ENCODE measurements at regions of chr13 and their contacts with region 1.

Region 1: GRCh38 chr13:94362411-94362909 is 117.0 kb downstream of the DCT start:
- DNase-seq: peak; percentile 46
- ATAC-seq: peak; percentile 87
- H3K4me3 ChIP-seq: no peak overlapping the region
- H3K27ac ChIP-seq: no peak overlapping the region
- H3K4me1 ChIP-seq: no peaks in the 10 kb centered on the region
- H3K27me3 ChIP-seq: no peaks in the 10 kb centered on the region
- CTCF ChIP-seq: peak; percentile 91
- EP300 ChIP-seq: no peak
- POLR2A ChIP-seq: no peak
- RAD21 ChIP-seq: peak; percentile 87

Region 2: GRCh38 chr13:92573467-92574057 is 1788.9 kb before region 1 on chr13:
- CTCF ChIA-PET with region 1: no interaction called
- POLR2A ChIA-PET with region 1: no interaction called
- in situ Hi-C with region 1: no loop called
- intact Hi-C with region 1: loop called (anchors 5 kb)
- DNase-seq: peak; percentile 44
- ATAC-seq: peak; percentile 89
- H3K4me3 ChIP-seq: no peak overlapping the region
- H3K27ac ChIP-seq: no peak overlapping the region
- H3K4me1 ChIP-seq: no peaks in the 10 kb centered on the region
- H3K27me3 ChIP-seq: no peaks in the 10 kb centered on the region
- CTCF ChIP-seq: peak; percentile 67
- EP300 ChIP-seq: no peak
- POLR2A ChIP-seq: no peak
- RAD21 ChIP-seq: no peak

Region 3: DNA sequence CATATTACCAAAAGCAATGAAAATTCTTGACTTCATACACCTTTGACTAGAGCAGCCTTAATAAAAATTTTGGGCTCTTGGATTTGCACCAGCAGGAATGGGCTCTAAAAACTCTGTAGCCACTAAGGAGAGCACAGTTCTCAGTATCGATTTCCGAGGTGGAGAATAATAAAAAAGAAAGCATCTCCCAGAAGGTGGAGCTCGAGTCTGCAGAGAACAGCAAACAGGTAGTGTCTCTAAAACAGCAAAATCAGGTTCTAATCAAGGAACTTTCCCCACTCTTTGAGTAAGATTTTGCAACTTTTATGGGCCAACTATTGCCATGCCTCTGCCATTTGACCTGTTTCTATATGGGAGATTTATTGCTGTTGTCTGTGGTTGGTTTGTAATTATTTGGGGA is 1394.5 kb before region 1 on chr13:
- CTCF ChIA-PET with region 1: interaction called, 5 read pairs
- POLR2A ChIA-PET with region 1: no interaction called
- in situ Hi-C with region 1: loop called (anchors 25 kb)
- intact Hi-C with region 1: loop called (anchors 5 kb)
- DNase-seq: peak; percentile 18
- ATAC-seq: peak; percentile 71
- H3K4me3 ChIP-seq: no peak overlapping the region
- H3K27ac ChIP-seq: no peak overlapping the region
- H3K4me1 ChIP-seq: 0 out of 2 replicates have a peak, but pooled peaks cover 13% of the 10 kb centered on the region
- H3K27me3 ChIP-seq: no peaks in the 10 kb centered on the region; a peak in 1 of 5 replicates
- CTCF ChIP-seq: peak; percentile 62
- EP300 ChIP-seq: no peak
- POLR2A ChIP-seq: no peak
- RAD21 ChIP-seq: no peak

Region 4: GRCh38 chr13:93963266-93964145 is 399.0 kb before region 1 on chr13:
- CTCF ChIA-PET with region 1: no interaction called
- POLR2A ChIA-PET with region 1: no interaction called
- in situ Hi-C with region 1: no loop called
- intact Hi-C with region 1: loop called (anchors 10 kb)
- DNase-seq: peak; percentile 83
- ATAC-seq: peak; percentile 61
- H3K4me3 ChIP-seq: no peak overlapping the region; a peak in 2 of 6 replicates
- H3K27ac ChIP-seq: peak overlapping the region; percentile 39
- H3K4me1 ChIP-seq: peaks cover 52% of the 10 kb centered on the region
- H3K27me3 ChIP-seq: no peaks in the 10 kb centered on the region
- CTCF ChIP-seq: no peak
- EP300 ChIP-seq: peak in 1 of 2 experiments; percentile 84; a peak in 2 of 4 replicates
- POLR2A ChIP-seq: no peak
- RAD21 ChIP-seq: no peak

Region 5: GRCh38 chr13:94119360-94119936 is 243.0 kb before region 1 on chr13:
- CTCF ChIA-PET with region 1: interaction called, 4 read pairs
- POLR2A ChIA-PET with region 1: no interaction called
- in situ Hi-C with region 1: no loop called
- intact Hi-C with region 1: loop called (anchors 2 kb)
- DNase-seq: peak; percentile 90
- ATAC-seq: peak; percentile 99
- H3K4me3 ChIP-seq: peak overlapping the region; percentile 19 to 58 (median 26); a peak in 4 of 6 replicates
- H3K27ac ChIP-seq: peak overlapping the region; percentile 90
- H3K4me1 ChIP-seq: peaks cover 31% of the 10 kb centered on the region
- H3K27me3 ChIP-seq: no peaks in the 10 kb centered on the region
- CTCF ChIP-seq: peak; percentile 88
- EP300 ChIP-seq: peak in 1 of 2 experiments; percentile 55; a peak in 1 of 4 replicates
- POLR2A ChIP-seq: peak; percentile 35 to 52; a peak in 1 of 4 replicates
- RAD21 ChIP-seq: peak; percentile 55

Region 6: DNA sequence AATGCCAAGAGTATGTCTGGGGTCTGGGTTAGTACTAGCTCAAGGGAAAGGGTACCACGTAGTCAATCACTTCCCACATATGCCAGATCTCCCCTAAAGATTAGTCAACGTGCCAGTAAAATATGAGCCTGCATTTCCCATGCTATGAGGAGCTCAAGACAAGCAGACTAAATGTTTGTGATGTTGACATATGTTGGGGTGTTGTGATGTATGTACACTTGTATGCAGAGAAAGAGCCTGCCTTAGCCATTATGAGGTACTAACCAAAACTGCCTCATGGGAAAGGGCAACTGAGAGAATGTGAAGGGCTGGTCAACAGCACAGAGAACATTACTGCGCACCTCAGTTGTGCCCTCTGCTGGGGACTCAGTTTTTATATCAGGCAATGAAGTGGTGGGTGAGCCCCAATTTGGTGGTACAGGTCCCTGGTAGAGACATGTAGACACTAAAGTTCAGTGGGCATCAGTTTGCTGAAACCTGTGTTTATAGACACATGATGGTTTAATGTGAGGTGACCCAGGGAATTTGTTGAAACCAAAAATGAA is 170.0 kb before region 1 on chr13:
- CTCF ChIA-PET with region 1: interaction called, 3 read pairs
- POLR2A ChIA-PET with region 1: no interaction called
- in situ Hi-C with region 1: no loop called
- intact Hi-C with region 1: loop called (anchors 5 kb)
- DNase-seq: peak; percentile 30
- ATAC-seq: peak; percentile 79
- H3K4me3 ChIP-seq: no peak overlapping the region
- H3K27ac ChIP-seq: no peak overlapping the region
- H3K4me1 ChIP-seq: no peaks in the 10 kb centered on the region
- H3K27me3 ChIP-seq: no peaks in the 10 kb centered on the region; a peak in 1 of 5 replicates
- CTCF ChIP-seq: peak; percentile 64
- EP300 ChIP-seq: no peak
- POLR2A ChIP-seq: no peak
- RAD21 ChIP-seq: peak; percentile 62

Region 7: GRCh38 chr13:94312511-94313216 is 49.8 kb before region 1 on chr13:
- CTCF ChIA-PET with region 1: no interaction called
- POLR2A ChIA-PET with region 1: no interaction called
- in situ Hi-C with region 1: no loop called
- intact Hi-C with region 1: no loop called
- DNase-seq: no peak
- ATAC-seq: no peak
- H3K4me3 ChIP-seq: no peak overlapping the region
- H3K27ac ChIP-seq: no peak overlapping the region
- H3K4me1 ChIP-seq: no peaks in the 10 kb centered on the region
- H3K27me3 ChIP-seq: no peaks in the 10 kb centered on the region
- CTCF ChIP-seq: no peak
- EP300 ChIP-seq: no peak
- POLR2A ChIP-seq: no peak
- RAD21 ChIP-seq: no peak

Region 8: DNA sequence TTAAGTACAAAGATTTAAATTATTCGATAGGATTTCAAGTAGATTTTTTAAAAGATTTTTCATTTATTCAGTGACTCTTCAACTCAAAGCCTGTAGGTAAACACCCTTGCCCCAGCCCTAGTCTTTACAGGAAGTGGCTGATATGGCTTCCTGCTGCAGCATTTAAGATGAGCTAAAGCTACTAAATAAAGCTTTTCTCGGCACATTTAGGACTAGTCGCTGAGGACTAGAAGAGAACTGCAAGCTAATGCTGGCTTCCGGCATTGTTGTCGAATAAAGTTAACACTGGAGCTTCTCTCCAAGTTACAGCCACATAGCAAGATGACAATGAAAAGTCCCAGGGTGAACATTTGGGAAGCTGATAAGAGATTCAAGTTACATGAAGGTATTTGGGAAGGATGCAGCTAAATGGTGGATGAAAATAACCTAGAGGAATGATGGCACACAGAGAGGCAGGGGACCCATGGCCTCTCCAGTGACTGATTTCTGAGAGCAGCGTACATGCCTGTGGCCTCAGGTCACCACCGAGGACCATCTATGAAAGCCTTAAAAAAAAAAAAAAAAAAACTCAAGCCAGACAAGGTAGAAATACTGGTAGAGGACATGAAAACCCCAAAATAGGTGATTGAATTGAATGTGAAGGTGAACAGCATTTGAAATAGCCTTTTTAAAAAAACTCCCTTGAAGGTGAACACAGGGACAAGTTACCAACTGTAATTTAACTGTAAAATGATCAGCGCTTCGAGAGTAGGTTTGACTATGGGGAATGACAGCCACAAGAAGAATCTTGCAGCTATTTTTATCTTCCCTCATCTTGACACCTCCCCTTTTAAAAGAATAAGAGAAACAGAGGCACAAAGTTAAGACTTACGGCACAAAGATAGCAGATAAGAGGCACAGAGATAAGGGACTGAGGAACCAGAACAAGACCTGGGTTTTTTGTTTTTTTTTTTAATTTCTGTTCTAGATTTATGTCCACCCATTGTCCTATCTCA is 38.4 kb before region 1 on chr13:
- CTCF ChIA-PET with region 1: no interaction called
- POLR2A ChIA-PET with region 1: no interaction called
- in situ Hi-C with region 1: no loop called
- intact Hi-C with region 1: no loop called
- DNase-seq: no peak
- ATAC-seq: no peak
- H3K4me3 ChIP-seq: no peak overlapping the region
- H3K27ac ChIP-seq: no peak overlapping the region
- H3K4me1 ChIP-seq: peaks cover under 1% of the 10 kb centered on the region; the same call in 1 of the 2 replicates
- H3K27me3 ChIP-seq: no peaks in the 10 kb centered on the region
- CTCF ChIP-seq: no peak
- EP300 ChIP-seq: no peak
- POLR2A ChIP-seq: no peak
- RAD21 ChIP-seq: no peak